WTC11 (cell line): ENCODE measurements at regions of chr18 and their contacts with region 1.

Region 1: GRCh38 chr18:74081966-74082741 is 65.5 kb downstream of the FBXO15 start:
- DNase-seq: peak; percentile 74
- ATAC-seq: peak; percentile 100
- H3K4me3 Mint-ChIP-seq: no peak overlapping the region
- H3K27ac Mint-ChIP-seq: no peak overlapping the region
- H3K4me1 Mint-ChIP-seq: peaks cover 3% of the 10 kb centered on the region
- H3K27me3 Mint-ChIP-seq: no peaks in the 10 kb centered on the region
- CTCF ChIP-seq: no peak; the same call in 1 of the 2 replicates

Region 2: DNA sequence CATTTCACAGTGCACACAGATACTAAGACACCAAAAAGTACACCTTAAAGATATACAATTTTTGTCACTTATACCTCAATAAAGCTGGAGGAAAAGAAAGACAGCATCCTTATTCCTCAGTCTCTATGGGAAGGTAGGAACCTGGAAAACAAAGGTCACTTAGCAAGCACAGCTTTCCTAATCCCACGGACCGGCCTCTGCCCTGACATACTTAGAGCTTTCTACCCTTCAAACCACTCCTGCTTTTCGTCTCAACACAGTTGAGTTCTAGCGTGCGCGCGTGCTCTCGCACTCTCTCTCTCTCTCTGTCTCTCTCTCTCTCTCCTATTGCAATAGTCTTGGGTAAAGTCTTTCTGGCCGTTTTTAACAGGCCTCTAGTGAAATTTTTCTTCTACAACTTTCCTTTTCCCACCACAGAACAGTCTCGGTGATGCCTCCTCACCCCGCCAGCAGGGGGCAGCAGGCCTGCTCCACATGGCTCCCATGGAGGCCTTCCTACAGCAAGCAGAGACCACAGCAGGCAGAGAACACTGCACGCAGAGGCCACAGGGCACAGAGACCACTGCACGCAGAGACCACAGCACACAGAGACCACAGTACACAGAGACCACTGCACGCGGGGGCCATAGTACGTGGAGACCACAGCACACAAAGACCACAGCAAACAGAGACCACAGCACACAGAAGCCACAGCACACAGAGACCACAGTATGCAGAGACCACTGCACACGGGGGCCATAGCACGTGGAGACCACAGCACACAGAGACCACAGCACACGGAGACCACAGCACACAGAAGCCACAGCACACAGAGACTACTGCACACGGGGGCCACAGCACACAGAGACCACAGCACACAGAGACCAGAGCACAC is 41.5 kb before region 1 on chr18:
- CTCF ChIA-PET with region 1: interaction called, 24 read pairs
- POLR2A ChIA-PET with region 1: no interaction called
- DNase-seq: peak; percentile 83
- ATAC-seq: peak; percentile 95
- H3K4me3 Mint-ChIP-seq: no peak overlapping the region
- H3K27ac Mint-ChIP-seq: no peak overlapping the region
- H3K4me1 Mint-ChIP-seq: no peaks in the 10 kb centered on the region
- H3K27me3 Mint-ChIP-seq: no peaks in the 10 kb centered on the region
- CTCF ChIP-seq: peak; percentile 82

Region 3: DNA sequence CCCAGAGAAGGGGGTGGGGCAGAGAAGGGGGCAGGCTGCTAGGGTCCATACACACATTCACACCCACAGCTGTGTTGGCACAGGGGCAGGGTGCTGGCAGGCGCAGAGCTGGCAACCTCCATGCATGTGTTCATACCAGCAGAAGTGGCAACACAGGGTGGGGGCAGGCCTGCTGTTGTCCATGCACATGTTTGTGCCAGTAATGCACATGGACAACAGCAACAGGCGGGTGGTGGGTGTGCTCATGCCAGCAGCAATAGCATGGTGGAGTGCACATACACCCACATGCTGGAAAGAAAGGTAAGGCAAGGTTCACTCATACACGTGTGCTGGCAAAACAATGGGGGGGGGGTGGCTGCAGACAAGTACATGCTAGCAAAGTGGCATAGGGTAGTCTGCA is 10.8 kb after region 1 on chr18:
- CTCF ChIA-PET with region 1: interaction called, 10 read pairs
- POLR2A ChIA-PET with region 1: interaction called, 4 read pairs
- DNase-seq: no peak
- ATAC-seq: no peak
- H3K4me3 Mint-ChIP-seq: no peak overlapping the region
- H3K27ac Mint-ChIP-seq: no peak overlapping the region
- H3K4me1 Mint-ChIP-seq: peaks cover 3% of the 10 kb centered on the region; the same call in 1 of the 2 replicates
- H3K27me3 Mint-ChIP-seq: peaks cover 4% of the 10 kb centered on the region
- CTCF ChIP-seq: no peak

Region 4: GRCh38 chr18:74126684-74127482 is 44.7 kb after region 1 on chr18:
- CTCF ChIA-PET with region 1: interaction called, 11 read pairs
- POLR2A ChIA-PET with region 1: no interaction called
- DNase-seq: no peak
- ATAC-seq: peak; percentile 83
- H3K4me3 Mint-ChIP-seq: no peak overlapping the region
- H3K27ac Mint-ChIP-seq: no peak overlapping the region
- H3K4me1 Mint-ChIP-seq: peaks cover 15% of the 10 kb centered on the region
- H3K27me3 Mint-ChIP-seq: no peaks in the 10 kb centered on the region
- CTCF ChIP-seq: no peak

Region 5: DNA sequence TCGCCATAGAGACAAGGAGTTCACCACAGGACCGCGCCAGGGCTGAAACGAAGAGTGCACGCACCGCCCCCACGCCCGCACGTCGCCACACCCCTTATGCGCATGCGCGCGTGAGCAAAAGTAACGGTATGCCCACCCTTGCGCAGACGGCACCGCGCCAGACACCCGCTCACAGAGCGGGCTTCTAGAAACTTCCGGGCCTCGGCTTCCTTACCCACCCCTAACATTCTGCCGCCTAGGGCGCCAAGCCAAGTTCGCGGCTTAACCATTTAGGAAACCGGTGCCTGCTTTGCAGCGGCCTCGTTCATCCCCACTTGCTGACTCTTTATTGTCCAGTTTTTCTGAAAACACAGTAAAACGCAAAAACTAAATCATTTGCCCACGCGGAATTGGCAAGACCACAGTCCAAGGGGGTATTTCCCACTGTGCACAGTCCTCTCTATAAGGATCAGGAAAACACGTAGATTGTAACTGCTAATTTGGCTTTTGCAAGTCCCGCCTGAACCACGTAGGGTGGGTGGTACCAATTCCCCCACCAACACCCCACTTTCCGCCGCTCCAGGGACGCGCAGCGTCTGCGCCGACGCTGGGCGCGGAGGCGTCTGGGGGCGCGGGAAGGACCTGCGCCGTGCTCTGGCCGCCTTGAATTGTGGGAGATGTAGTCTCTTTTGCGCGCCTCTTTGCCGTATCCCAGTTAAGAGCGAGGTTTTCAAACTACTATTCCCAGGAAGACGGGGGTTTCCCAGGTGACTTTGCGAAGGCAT is 65.8 kb after region 1 on chr18 and contains the starts of genes FBXO15 and TIMM21:
- CTCF ChIA-PET with region 1: interaction called, 27 read pairs
- POLR2A ChIA-PET with region 1: no interaction called
- DNase-seq: peak; percentile 92
- ATAC-seq: peak; percentile 95
- H3K4me3 Mint-ChIP-seq: peak within 1 kb of the TSS; percentile 98
- H3K27ac Mint-ChIP-seq: peak within 1 kb of the TSS; percentile 97
- H3K4me1 Mint-ChIP-seq: peaks cover 26% of the 10 kb centered on the region
- H3K27me3 Mint-ChIP-seq: peaks cover 16% of the 10 kb centered on the region
- CTCF ChIP-seq: no peak
- total RNA-seq, gene FBXO15: 0.96 to 1.9 TPM (median 1.6 TPM) in 3 replicates
- total RNA-seq, gene TIMM21: 43.7 to 47.7 TPM (median 45.4 TPM) in 3 replicates

Region 6: GRCh38 chr18:74342416-74343043 is 260.4 kb after region 1 on chr18:
- CTCF ChIA-PET with region 1: interaction called, 13 read pairs
- POLR2A ChIA-PET with region 1: no interaction called
- DNase-seq: no peak
- ATAC-seq: no peak
- H3K4me3 Mint-ChIP-seq: no peak overlapping the region
- H3K27ac Mint-ChIP-seq: no peak overlapping the region
- H3K4me1 Mint-ChIP-seq: peaks cover 7% of the 10 kb centered on the region; the same call in 1 of the 2 replicates
- H3K27me3 Mint-ChIP-seq: no peaks in the 10 kb centered on the region
- CTCF ChIP-seq: peak; percentile 46